ENCODE measurements at regions of chr14 and their contacts with region 1.

Region 1: GRCh38 chr14:106831322-106831720 is 1304.9 kb downstream of the TMEM121 start:
- H3K4me3 ChIP-seq: no peak overlapping the region
- H3K27ac ChIP-seq: no peak overlapping the region
- H3K4me1 ChIP-seq: no peaks in the 10 kb centered on the region
- CTCF ChIP-seq: peak; percentile 80

Region 2: GRCh38 chr14:106657460-106657859 is 173.9 kb before region 1 on chr14:
- CTCF ChIA-PET with region 1: no interaction called
- POLR2A ChIA-PET with region 1: no interaction called
- H3K4me3 ChIP-seq: no peak overlapping the region
- H3K27ac ChIP-seq: no peak overlapping the region
- H3K4me1 ChIP-seq: no peaks in the 10 kb centered on the region
- CTCF ChIP-seq: no peak

Region 3: GRCh38 chr14:106802423-106803364 is 28.6 kb before region 1 on chr14:
- CTCF ChIA-PET with region 1: interaction called, 27 read pairs
- POLR2A ChIA-PET with region 1: no interaction called
- H3K4me3 ChIP-seq: no peak overlapping the region
- H3K27ac ChIP-seq: no peak overlapping the region
- H3K4me1 ChIP-seq: no peaks in the 10 kb centered on the region
- CTCF ChIP-seq: peak; percentile 27; the same call in 1 of the 2 replicates

Region 4: GRCh38 chr14:106812788-106813476 is 18.4 kb before region 1 on chr14:
- CTCF ChIA-PET with region 1: interaction called, 16 read pairs
- POLR2A ChIA-PET with region 1: no interaction called
- H3K4me3 ChIP-seq: no peak overlapping the region
- H3K27ac ChIP-seq: no peak overlapping the region
- H3K4me1 ChIP-seq: no peaks in the 10 kb centered on the region
- CTCF ChIP-seq: no peak

Region 5: GRCh38 chr14:106844608-106845285 is 13.4 kb after region 1 on chr14:
- CTCF ChIA-PET with region 1: interaction called, 50 read pairs
- POLR2A ChIA-PET with region 1: interaction called, 3 read pairs
- H3K4me3 ChIP-seq: peak overlapping the region; percentile 28
- H3K27ac ChIP-seq: peak overlapping the region; percentile 58; the same call in 1 of the 2 replicates
- H3K4me1 ChIP-seq: peaks cover 24% of the 10 kb centered on the region
- CTCF ChIP-seq: no peak

Measured in HEK293 (cell line).